T-cell (primary cell): ENCODE measurements at regions of chr12 and their contacts with region 1.

Region 1: GRCh38 chr12:68745904-68746571 is at the start of gene SLC35E3:
- DNase-seq: peak; percentile 79 to 95 (median 89)
- ATAC-seq: peak; percentile 99
- H3K4me3 ChIP-seq: peak within 1 kb of the TSS; percentile 87 to 99
- H3K4me3 Mint-ChIP-seq: peak within 1 kb of the TSS; percentile 96 to 99 (median 96)
- H3K27ac ChIP-seq: peak within 1 kb of the TSS; percentile 81
- H3K27ac Mint-ChIP-seq: peak within 1 kb of the TSS; percentile 87 to 91
- H3K4me1 ChIP-seq: peaks cover 15 to 18% of the 10 kb centered on the region in 2 experiments
- H3K4me1 Mint-ChIP-seq: peaks cover 42 to 54% (median 43%) of the 10 kb centered on the region in 3 donors
- H3K27me3 ChIP-seq: no peaks in the 10 kb centered on the region
- H3K27me3 Mint-ChIP-seq: no peaks in the 10 kb centered on the region
- total RNA-seq, gene SLC35E3: 6.4 to 10.8 (median 9.7) TPM

Region 2: GRCh38 chr12:68100232-68100631 is 645.8 kb before region 1 on chr12:
- CTCF ChIA-PET with region 1: no interaction called
- POLR2A ChIA-PET with region 1: no interaction called
- DNase-seq: no peak
- ATAC-seq: no peak
- H3K4me3 ChIP-seq: no peak overlapping the region
- H3K4me3 Mint-ChIP-seq: no peak overlapping the region
- H3K27ac ChIP-seq: no peak overlapping the region
- H3K27ac Mint-ChIP-seq: no peak overlapping the region
- H3K4me1 ChIP-seq: no peaks in the 10 kb centered on the region
- H3K4me1 Mint-ChIP-seq: no peaks in the 10 kb centered on the region
- H3K27me3 ChIP-seq: no peaks in the 10 kb centered on the region
- H3K27me3 Mint-ChIP-seq: peaks cover 0 to 4% of the 10 kb centered on the region in 2 donors

Region 3: GRCh38 chr12:68807576-68808387 is 61.7 kb after region 1 on chr12 and contains the start of gene MDM2:
- CTCF ChIA-PET with region 1: interaction called, 3 to 25 read pairs
- POLR2A ChIA-PET with region 1: interaction called, 4 to 11 read pairs
- DNase-seq: peak; percentile 93 to 99 (median 97)
- ATAC-seq: peak; percentile 90 to 95 (median 93)
- H3K4me3 ChIP-seq: peak within 1 kb of the TSS; percentile 79 to 82
- H3K4me3 Mint-ChIP-seq: peak within 1 kb of the TSS; percentile 91 to 97 (median 95)
- H3K27ac ChIP-seq: peak within 1 kb of the TSS; percentile 94
- H3K27ac Mint-ChIP-seq: peak within 1 kb of the TSS; percentile 98 to 99
- H3K4me1 ChIP-seq: peaks cover 3 to 22% of the 10 kb centered on the region in 2 experiments
- H3K4me1 Mint-ChIP-seq: peaks cover 26 to 39% (median 34%) of the 10 kb centered on the region in 3 donors
- H3K27me3 ChIP-seq: no peaks in the 10 kb centered on the region
- H3K27me3 Mint-ChIP-seq: no peaks in the 10 kb centered on the region
- total RNA-seq, gene MDM2: 75.3 to 96.6 (median 84.4) TPM

Region 4: DNA sequence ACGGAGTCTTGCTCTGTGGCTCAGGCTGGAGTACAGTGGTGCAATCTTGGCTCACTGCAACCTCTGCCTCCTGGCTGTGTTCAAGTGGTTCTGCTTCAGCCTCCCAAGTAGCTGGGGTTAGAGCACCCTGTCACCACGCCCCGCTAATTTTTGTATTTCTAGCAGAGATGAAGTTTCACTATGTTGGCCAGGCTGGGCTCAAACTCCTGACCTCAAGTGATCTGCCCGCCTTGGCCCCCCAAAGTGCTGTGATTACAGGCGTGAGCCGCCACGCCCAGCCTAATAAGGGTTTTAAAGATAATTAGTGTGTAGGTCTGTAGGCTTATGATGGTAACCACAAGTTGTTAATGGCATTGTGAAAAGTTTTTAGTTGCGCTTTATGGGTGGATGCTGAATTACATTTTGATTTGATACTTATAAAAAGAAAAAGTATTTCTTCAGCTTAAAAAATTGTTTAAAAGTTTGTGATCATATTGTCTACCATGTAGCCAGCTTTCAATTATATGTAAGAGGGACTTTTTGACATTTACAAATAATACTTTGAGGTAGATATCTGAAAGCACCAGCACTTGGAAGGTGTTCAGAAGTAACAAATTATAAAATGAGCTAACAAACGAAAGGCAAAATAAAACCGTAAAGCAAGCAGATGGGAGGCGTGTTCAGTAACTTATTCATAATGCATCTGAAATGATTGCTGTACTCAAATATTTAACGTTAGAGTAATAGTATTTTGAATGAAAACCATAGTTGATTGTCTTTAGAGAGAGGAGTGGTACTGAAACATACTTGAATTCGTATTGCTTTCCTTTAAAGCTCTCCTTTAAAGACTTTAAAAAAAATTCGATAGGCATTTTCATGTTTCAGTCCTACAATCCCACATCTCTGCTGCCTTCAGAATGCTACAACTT is 99.0 kb after region 1 on chr12:
- CTCF ChIA-PET with region 1: no interaction called
- POLR2A ChIA-PET with region 1: no interaction called
- DNase-seq: no peak
- ATAC-seq: no peak
- H3K4me3 ChIP-seq: no peak overlapping the region
- H3K4me3 Mint-ChIP-seq: no peak overlapping the region
- H3K27ac ChIP-seq: no peak overlapping the region
- H3K27ac Mint-ChIP-seq: no peak overlapping the region
- H3K4me1 ChIP-seq: no peaks in the 10 kb centered on the region
- H3K4me1 Mint-ChIP-seq: peaks cover 2 to 12% (median 8%) of the 10 kb centered on the region in 3 donors
- H3K27me3 ChIP-seq: no peaks in the 10 kb centered on the region
- H3K27me3 Mint-ChIP-seq: no peaks in the 10 kb centered on the region